Ascending aorta (tissue), 2 donors: ENCODE measurements at regions of chr11 and their contacts with region 1.

Region 1: GRCh38 chr11:9137293-9138132 is 46.1 kb upstream of the SCUBE2 start:
- DNase-seq: peak in 1 of 2 donors; percentile 86
- H3K4me3 ChIP-seq: no peak overlapping the region
- H3K27ac ChIP-seq: peak overlapping the region; percentile 58 to 67
- H3K4me1 ChIP-seq: peaks cover 7 to 19% of the 10 kb centered on the region in 2 donors
- H3K27me3 ChIP-seq: no peaks in the 10 kb centered on the region
- CTCF ChIP-seq: peak; percentile 87 to 98 (median 92)

Region 2: DNA sequence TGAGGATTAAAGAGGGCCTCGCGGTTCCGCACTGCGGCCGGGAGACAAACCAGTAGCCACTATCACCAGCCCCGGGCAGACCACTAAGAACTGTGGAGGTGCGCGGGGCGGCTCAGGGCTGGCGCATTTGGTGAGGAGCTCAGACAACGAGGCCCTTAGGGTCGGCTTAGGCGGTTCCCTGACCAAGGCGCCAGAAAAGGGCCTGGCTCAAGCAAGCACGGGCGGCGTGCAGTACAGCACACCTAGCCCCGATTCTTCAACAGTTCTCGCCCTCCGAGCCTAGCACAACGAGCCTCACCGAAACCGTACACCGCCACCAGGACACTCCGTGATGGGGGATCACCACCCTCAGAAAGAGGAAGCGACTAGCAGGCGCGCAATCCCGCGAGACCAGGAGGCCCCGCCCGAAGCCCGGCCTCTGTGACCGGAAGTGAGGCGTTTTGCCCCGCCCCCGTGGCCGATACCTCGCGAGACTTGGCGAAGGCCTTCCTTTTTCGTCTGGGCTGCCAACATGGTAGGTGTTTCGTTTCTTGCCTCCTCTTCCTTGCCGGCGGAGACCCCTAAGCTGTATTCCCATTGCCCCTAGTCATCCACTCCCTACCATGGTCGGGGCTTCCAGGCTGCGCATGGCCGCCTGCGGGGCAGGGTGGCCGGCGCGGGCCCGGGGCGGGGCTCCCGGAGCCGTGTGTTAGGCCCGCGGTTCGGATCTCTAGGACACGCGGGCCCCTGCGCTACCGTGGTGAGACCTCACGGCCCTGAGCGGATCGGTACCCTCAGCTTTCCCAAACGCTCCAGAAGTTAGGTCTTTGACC is 455.0 kb before region 1 on chr11 and contains the starts of genes RPL27A and TRIM66:
- intact Hi-C with region 1: loop called (anchors 5 kb)
- DNase-seq: peak; percentile 91 to 99
- H3K4me3 ChIP-seq: peak within 1 kb of the TSS; percentile 65 to 86
- H3K27ac ChIP-seq: peak within 1 kb of the TSS; percentile 81 to 97
- H3K4me1 ChIP-seq: peaks cover 0 to 16% of the 10 kb centered on the region in 2 donors
- H3K27me3 ChIP-seq: no peaks in the 10 kb centered on the region
- CTCF ChIP-seq: peak in 2 of 3 experiments; percentile 8 to 11
- total RNA-seq, gene RPL27A: 789 TPM
- total RNA-seq, gene TRIM66: 3.9 TPM

Region 3: DNA sequence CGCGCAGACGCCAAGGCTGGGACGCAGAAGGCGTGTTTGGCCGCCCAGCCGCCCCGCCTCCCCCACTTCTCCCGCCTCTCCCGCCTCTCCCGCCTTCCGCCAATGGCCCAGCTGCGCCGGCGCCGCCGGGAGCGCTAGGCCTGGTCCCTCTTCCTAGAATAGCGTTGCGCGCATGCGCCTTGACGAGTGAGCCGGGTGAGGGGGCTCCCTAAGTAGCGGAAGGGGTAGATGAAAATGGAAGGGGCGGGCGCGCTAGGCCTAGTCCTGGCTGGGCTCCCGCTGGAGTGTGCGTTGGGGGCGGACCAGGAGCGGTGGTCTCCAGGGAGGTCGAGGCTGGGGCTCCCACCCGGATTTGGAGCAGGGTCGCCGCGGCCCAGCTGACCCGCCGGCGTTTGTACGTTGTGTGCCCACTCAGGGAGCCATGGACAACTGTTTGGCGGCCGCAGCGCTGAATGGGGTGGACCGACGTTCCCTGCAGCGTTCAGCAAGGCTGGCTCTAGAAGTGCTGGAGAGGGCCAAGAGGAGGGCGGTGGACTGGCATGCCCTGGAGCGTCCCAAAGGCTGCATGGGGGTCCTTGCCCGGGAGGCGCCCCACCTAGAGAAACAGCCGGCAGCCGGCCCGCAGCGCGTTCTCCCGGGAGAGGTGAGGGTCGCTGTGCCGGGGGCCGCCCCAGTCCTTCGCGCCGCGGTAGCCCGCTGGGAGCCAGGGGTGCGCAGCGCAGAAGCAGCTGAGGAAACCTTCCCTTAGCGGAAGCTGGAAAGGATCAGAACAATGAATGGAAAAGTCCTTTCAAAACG is 226.3 kb before region 1 on chr11 and contains the start of gene AKIP1:
- intact Hi-C with region 1: loop called (anchors 5 kb)
- DNase-seq: peak; percentile 81 to 97
- H3K4me3 ChIP-seq: peak within 1 kb of the TSS; percentile 72 to 79
- H3K27ac ChIP-seq: peak within 1 kb of the TSS; percentile 88 to 91
- H3K4me1 ChIP-seq: peaks cover 4 to 12% of the 10 kb centered on the region in 2 donors
- H3K27me3 ChIP-seq: no peaks in the 10 kb centered on the region
- CTCF ChIP-seq: no peak
- total RNA-seq, gene AKIP1: 11.4 TPM

Region 4: GRCh38 chr11:9003573-9004309 is 133.8 kb before region 1 on chr11 and contains the start of gene NRIP3:
- intact Hi-C with region 1: loop called (anchors 5 kb)
- DNase-seq: peak in 1 of 2 donors; percentile 85
- H3K4me3 ChIP-seq: peak within 1 kb of the TSS; percentile 40 to 61
- H3K27ac ChIP-seq: peak within 1 kb of the TSS in 1 of 2 donors; percentile 0
- H3K4me1 ChIP-seq: peaks cover 0 to 14% of the 10 kb centered on the region in 2 donors
- H3K27me3 ChIP-seq: no peaks in the 10 kb centered on the region
- CTCF ChIP-seq: no peak
- total RNA-seq, gene NRIP3: 7.7 TPM

Region 5: GRCh38 chr11:9015677-9016076 is 121.8 kb before region 1 on chr11:
- intact Hi-C with region 1: loop called (anchors 1 kb)
- DNase-seq: peak in 1 of 2 donors; percentile 79
- H3K4me3 ChIP-seq: no peak overlapping the region
- H3K27ac ChIP-seq: no peak overlapping the region
- H3K4me1 ChIP-seq: no peaks in the 10 kb centered on the region
- H3K27me3 ChIP-seq: no peaks in the 10 kb centered on the region
- CTCF ChIP-seq: peak; percentile 61 to 74 (median 63)

Region 6: GRCh38 chr11:9193321-9193720 is 55.8 kb after region 1 on chr11:
- intact Hi-C with region 1: no loop called
- DNase-seq: no peak
- H3K4me3 ChIP-seq: no peak overlapping the region
- H3K27ac ChIP-seq: no peak overlapping the region
- H3K4me1 ChIP-seq: no peaks in the 10 kb centered on the region
- H3K27me3 ChIP-seq: no peaks in the 10 kb centered on the region
- CTCF ChIP-seq: no peak

Region 7: DNA sequence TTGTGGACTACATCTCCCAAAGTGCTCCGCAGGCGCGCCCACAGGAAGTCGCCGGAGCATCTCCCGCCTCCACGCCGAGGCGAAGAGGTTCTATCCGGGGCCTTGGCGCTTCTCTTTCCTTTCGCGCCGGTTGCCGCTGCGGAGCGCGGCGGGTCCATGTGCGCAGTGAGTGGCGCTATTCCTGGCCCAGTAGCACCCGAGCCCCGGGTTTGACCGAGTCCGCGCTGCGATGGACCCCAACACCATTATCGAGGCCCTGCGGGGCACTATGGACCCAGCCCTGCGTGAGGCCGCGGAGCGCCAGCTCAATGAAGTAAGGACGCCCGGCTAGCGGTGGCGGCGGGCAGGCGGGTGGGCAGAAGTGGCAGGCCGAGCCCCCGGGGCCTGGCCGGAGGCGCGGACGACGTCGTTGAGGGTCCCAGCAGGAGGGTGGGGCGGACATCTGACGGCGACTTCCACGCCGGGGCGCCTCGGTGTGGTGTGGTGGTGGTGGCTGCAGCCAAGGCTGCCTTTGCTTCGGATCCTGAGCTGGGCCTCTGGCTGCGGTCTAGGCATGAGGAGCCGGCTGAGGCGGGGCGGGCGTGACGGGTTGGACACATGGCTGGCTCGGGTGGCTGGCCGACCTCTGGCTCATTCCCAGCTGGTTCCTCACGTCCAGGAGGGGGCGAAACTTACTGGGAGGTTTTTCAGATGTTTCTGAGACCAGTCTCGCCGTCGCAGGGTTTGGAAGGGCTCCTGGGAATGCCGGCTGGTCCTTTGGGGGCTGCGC is 247.2 kb after region 1 on chr11 and contains the start of gene IPO7:
- intact Hi-C with region 1: no loop called
- DNase-seq: peak; percentile 70 to 95
- H3K4me3 ChIP-seq: peak within 1 kb of the TSS; percentile 86 to 97
- H3K27ac ChIP-seq: peak within 1 kb of the TSS; percentile 94 to 99
- H3K4me1 ChIP-seq: peaks cover 0 to 36% of the 10 kb centered on the region in 2 donors
- H3K27me3 ChIP-seq: no peaks in the 10 kb centered on the region
- CTCF ChIP-seq: peak; percentile 8 to 41 (median 38)
- total RNA-seq, gene IPO7: 93.4 TPM